ENCODE measurements at regions of chr20 and their contacts with region 1.

Region 1: GRCh38 chr20:34312544-34313217 is 9.5 kb upstream of the AHCY start:
- DNase-seq: peak; percentile 91
- ATAC-seq: peak; percentile 94
- H3K4me3 ChIP-seq: peak overlapping the region; percentile 24 to 58
- H3K27ac ChIP-seq: 0 out of 2 replicates have a peak overlapping the region, but pooled peaks have one; percentile 3
- H3K4me1 ChIP-seq: 0 out of 2 replicates have a peak, but pooled peaks cover 12% of the 10 kb centered on the region
- H3K27me3 ChIP-seq: no peaks in the 10 kb centered on the region
- CTCF ChIP-seq: peak; percentile 99

Region 2: GRCh38 chr20:34324541-34324940 is 11.9 kb after region 1 on chr20:
- CTCF ChIA-PET with region 1: no interaction called
- POLR2A ChIA-PET with region 1: no interaction called
- in situ Hi-C with region 1: no loop called
- intact Hi-C with region 1: no loop called
- DNase-seq: no peak
- ATAC-seq: no peak
- H3K4me3 ChIP-seq: no peak overlapping the region
- H3K27ac ChIP-seq: no peak overlapping the region
- H3K4me1 ChIP-seq: no peaks in the 10 kb centered on the region
- H3K27me3 ChIP-seq: no peaks in the 10 kb centered on the region
- CTCF ChIP-seq: no peak

Region 3: GRCh38 chr20:34337982-34338726 is 25.5 kb after region 1 on chr20:
- CTCF ChIA-PET with region 1: interaction called, 10 read pairs
- POLR2A ChIA-PET with region 1: no interaction called
- in situ Hi-C with region 1: no loop called
- intact Hi-C with region 1: no loop called
- DNase-seq: no peak
- ATAC-seq: no peak
- H3K4me3 ChIP-seq: no peak overlapping the region
- H3K27ac ChIP-seq: no peak overlapping the region
- H3K4me1 ChIP-seq: peaks cover 5% of the 10 kb centered on the region
- H3K27me3 ChIP-seq: no peaks in the 10 kb centered on the region
- CTCF ChIP-seq: no peak

Region 4: GRCh38 chr20:34377072-34377847 is 64.6 kb after region 1 on chr20:
- CTCF ChIA-PET with region 1: interaction called, 12 read pairs
- POLR2A ChIA-PET with region 1: no interaction called
- in situ Hi-C with region 1: no loop called
- intact Hi-C with region 1: loop called (anchors 5 kb)
- DNase-seq: no peak
- ATAC-seq: no peak
- H3K4me3 ChIP-seq: no peak overlapping the region
- H3K27ac ChIP-seq: peak overlapping the region; percentile 64; the same call in 1 of the 2 replicates
- H3K4me1 ChIP-seq: peaks cover 26% of the 10 kb centered on the region
- H3K27me3 ChIP-seq: no peaks in the 10 kb centered on the region
- CTCF ChIP-seq: no peak

Region 5: DNA sequence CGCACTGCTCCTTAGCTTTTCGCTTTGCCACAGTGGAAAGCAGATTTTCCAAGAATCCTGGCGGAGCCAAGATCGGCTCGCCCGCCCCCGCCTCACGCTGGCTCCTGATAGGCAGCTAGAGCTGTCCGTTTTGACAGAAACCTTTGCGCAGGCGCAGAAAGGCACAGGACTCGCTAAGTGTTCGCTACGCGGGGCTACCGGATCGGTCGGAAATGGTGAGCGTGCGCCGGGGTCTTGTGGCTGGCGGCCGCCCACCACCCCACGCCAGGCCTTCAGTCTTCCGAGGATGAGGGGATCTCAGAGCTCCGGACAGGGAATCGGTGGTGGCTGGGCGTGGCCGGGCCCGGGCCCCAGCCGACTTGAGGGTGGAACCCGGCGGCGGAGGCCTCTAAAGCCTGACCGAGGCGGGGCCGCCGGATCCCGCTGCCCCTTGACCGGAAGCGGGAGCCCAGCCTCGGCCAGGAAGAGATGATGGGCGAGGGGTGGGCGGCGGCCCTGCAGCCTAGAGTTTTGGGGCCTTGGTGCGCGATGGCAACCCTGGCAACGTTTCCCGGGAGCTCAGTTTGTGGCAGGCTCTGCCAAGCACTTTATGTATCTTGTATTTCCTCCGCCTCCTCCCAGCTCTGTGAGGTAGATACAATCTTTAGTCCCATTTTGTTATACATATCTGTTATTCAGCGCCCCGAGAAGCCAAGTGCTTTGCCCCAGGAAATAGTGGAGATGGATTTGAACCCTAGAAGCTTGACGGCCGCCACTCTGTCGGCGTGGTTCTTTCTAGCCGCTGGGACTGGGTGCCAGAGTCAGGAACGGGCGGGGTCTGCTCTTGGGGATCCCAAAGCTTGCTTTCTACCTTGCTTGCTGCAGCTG is 203.8 kb after region 1 on chr20 and contains the start of gene DYNLRB1:
- CTCF ChIA-PET with region 1: interaction called, 17 read pairs
- POLR2A ChIA-PET with region 1: no interaction called
- in situ Hi-C with region 1: no loop called
- intact Hi-C with region 1: no loop called
- DNase-seq: peak; percentile 77
- ATAC-seq: peak; percentile 93
- H3K4me3 ChIP-seq: peak within 1 kb of the TSS; percentile 70 to 98
- H3K27ac ChIP-seq: peak within 1 kb of the TSS; percentile 92
- H3K4me1 ChIP-seq: peaks cover 9% of the 10 kb centered on the region
- H3K27me3 ChIP-seq: no peaks in the 10 kb centered on the region
- CTCF ChIP-seq: no peak
- total RNA-seq, gene DYNLRB1: 155 TPM

Region 6: GRCh38 chr20:34585019-34585418 is 272.3 kb after region 1 on chr20:
- CTCF ChIA-PET with region 1: no interaction called
- POLR2A ChIA-PET with region 1: interaction called, 19 read pairs
- in situ Hi-C with region 1: no loop called
- intact Hi-C with region 1: no loop called
- DNase-seq: no peak
- ATAC-seq: no peak
- H3K4me3 ChIP-seq: no peak overlapping the region
- H3K27ac ChIP-seq: no peak overlapping the region
- H3K4me1 ChIP-seq: no peaks in the 10 kb centered on the region
- H3K27me3 ChIP-seq: no peaks in the 10 kb centered on the region
- CTCF ChIP-seq: no peak